ENCODE measurements at regions of chr13 and their contacts with region 1.

Region 1: GRCh38 chr13:23129331-23129730 is 51.4 kb upstream of the SGCG start:
- DNase-seq: no peak
- H3K4me3 ChIP-seq: no peak overlapping the region
- H3K27ac ChIP-seq: no peak overlapping the region
- H3K27me3 ChIP-seq: no peaks in the 10 kb centered on the region
- CTCF ChIP-seq: no peak

Region 2: GRCh38 chr13:23140487-23140886 is 11.2 kb after region 1 on chr13:
- CTCF ChIA-PET with region 1: no interaction called
- POLR2A ChIA-PET with region 1: interaction called, 11 read pairs
- DNase-seq: no peak
- H3K4me3 ChIP-seq: no peak overlapping the region
- H3K27ac ChIP-seq: no peak overlapping the region
- H3K27me3 ChIP-seq: no peaks in the 10 kb centered on the region
- CTCF ChIP-seq: no peak

Measured in AG04450 (cell line).